ENCODE measurements at regions of chr7 and their contacts with region 1.

Region 1: GRCh38 chr7:103296901-103297836 is at the start of gene PMPCB:
- DNase-seq: peak; percentile 95 to 99 (median 97)
- ATAC-seq: peak; percentile 97
- H3K4me3 ChIP-seq: peak within 1 kb of the TSS; percentile 97
- H3K27ac ChIP-seq: peak within 1 kb of the TSS; percentile 87
- H3K4me1 ChIP-seq: no peaks in the 10 kb centered on the region
- H3K27me3 ChIP-seq: no peaks in the 10 kb centered on the region
- total RNA-seq, gene PMPCB: 58.2 to 72.9 (median 59.6) TPM

Region 2: DNA sequence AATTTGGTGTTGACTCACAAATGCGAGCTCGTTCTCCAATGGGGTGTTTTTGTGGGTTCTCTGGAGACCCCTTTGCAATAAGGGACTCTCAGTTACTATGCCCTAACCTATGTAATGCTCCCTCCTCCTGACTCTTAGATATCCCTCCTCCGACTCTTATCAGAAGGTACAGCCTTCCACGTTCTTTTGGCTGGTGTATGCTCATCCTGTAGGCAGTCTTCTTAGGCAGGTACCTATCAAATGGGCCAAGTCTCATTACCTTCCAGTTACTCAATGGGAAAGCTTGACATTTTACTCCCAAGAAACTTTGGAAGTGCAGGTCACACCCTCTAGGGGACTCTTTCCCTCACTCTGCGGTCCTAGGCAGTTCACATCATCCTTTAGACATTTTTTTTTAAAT is 116.2 kb after region 1 on chr7:
- intact Hi-C with region 1: loop called in 1 of 4 experiments (anchors 5 kb)
- DNase-seq: no peak
- ATAC-seq: no peak
- H3K4me3 ChIP-seq: no peak overlapping the region
- H3K27ac ChIP-seq: no peak overlapping the region
- H3K4me1 ChIP-seq: no peaks in the 10 kb centered on the region
- H3K27me3 ChIP-seq: no peaks in the 10 kb centered on the region

Measured in right cardiac atrium (tissue), 5 donors.